Esophagus squamous epithelium (tissue), 5 donors: ENCODE measurements at regions of chr18 and their contacts with region 1.

Region 1: GRCh38 chr18:32470713-32471633 is at the start of gene GAREM1:
- DNase-seq: peak; percentile 54
- H3K4me3 ChIP-seq: peak within 1 kb of the TSS; percentile 66 to 87 (median 84)
- H3K27ac ChIP-seq: peak within 1 kb of the TSS; percentile 86 to 95 (median 90)
- H3K4me1 ChIP-seq: peaks cover 0 to 44% (median 5%) of the 10 kb centered on the region in 3 donors
- H3K27me3 ChIP-seq: peaks cover 0 to 13% (median 0%) of the 10 kb centered on the region in 4 donors
- CTCF ChIP-seq: peak in 5 of 6 experiments; percentile 58 to 89 (median 83)
- POLR2A ChIP-seq: peak in 3 of 4 donors; percentile 80 to 93 (median 88)
- total RNA-seq, gene GAREM1: 10.8 to 32.5 (median 18.3) TPM

Region 2: GRCh38 chr18:32271672-32272208 is 199.2 kb before region 1 on chr18:
- intact Hi-C with region 1: loop called (anchors 5 kb)
- DNase-seq: no peak
- H3K4me3 ChIP-seq: no peak overlapping the region
- H3K27ac ChIP-seq: no peak overlapping the region
- H3K4me1 ChIP-seq: no peaks in the 10 kb centered on the region
- H3K27me3 ChIP-seq: no peaks in the 10 kb centered on the region
- CTCF ChIP-seq: peak in 5 of 6 experiments; percentile 63 to 82 (median 66)
- POLR2A ChIP-seq: no peak

Region 3: DNA sequence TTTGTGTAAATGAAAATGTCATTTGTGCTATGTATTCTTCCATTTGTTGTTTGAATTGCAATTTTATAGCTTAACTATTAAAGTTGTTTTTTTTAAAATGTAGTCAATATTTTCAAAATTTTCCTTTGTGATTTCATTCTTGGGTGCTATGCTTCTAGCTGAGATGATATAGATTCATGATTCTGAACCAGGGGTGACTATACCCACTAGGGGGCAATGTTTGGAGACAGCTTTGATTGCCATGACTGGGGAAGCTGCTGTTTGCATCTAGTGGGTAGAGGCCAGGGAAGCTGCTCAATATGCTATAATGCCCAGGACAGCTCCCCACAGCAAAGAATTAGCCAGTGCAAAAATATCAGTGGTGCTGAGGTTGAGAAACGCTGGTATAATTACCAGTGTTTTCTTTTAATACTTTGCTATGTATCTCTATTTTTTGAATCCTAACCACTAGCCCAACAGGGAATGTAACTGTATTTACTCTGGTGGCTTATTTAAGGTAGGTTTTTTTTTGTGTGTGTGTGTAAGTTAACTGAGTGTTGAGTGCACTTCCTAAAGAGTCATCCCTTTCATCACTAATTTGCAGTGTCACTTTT is 181.4 kb before region 1 on chr18:
- intact Hi-C with region 1: loop called (anchors 5 kb)
- DNase-seq: no peak
- H3K4me3 ChIP-seq: no peak overlapping the region
- H3K27ac ChIP-seq: no peak overlapping the region
- H3K4me1 ChIP-seq: peaks cover 0 to 8% (median 0%) of the 10 kb centered on the region in 3 donors
- H3K27me3 ChIP-seq: no peaks in the 10 kb centered on the region
- CTCF ChIP-seq: peak in 5 of 6 experiments; percentile 57 to 73 (median 65)
- POLR2A ChIP-seq: no peak